Activated B cell treated with CpG ODN at 0.5 μM for 24 hours (primary cell): ENCODE measurements at regions of chr1 and their contacts with region 1.

Region 1: DNA sequence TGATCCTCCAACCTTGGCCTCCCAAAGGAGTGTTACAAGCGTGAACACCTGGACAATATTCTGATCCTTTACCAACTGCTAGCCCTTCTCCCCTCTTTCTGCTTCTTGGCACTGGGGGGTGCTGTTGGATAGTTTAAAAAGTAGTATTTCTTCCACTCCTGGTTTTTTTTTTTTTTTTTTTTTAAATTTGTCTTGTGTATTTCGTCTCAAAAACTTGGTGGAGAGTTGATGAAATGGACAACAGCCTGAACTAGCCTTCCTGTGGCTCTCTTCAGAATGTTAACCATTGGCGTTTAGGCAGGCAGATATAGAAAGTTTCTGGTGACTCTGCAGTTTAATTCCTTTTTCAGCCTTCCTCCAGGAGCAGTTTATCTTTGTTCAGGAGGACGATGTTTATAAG is 69.7 kb upstream of the USP24 start:
- DNase-seq: no peak
- ATAC-seq: no peak
- H3K4me3 Mint-ChIP-seq: no peak overlapping the region
- H3K27ac Mint-ChIP-seq: no peak overlapping the region
- H3K4me1 Mint-ChIP-seq: peaks cover 47% of the 10 kb centered on the region
- H3K27me3 Mint-ChIP-seq: peaks cover 3% of the 10 kb centered on the region
- CTCF ChIP-seq: no peak

Region 2: GRCh38 chr1:55257958-55258357 is 26.9 kb before region 1 on chr1:
- CTCF ChIA-PET with region 1: interaction called, 5 read pairs
- POLR2A ChIA-PET with region 1: interaction called, 15 read pairs
- intact Hi-C with region 1: loop called (anchors 1 kb)
- DNase-seq: peak; percentile 34
- ATAC-seq: peak; percentile 50
- H3K4me3 Mint-ChIP-seq: peak overlapping the region; percentile 57
- H3K27ac Mint-ChIP-seq: peak overlapping the region; percentile 93
- H3K4me1 Mint-ChIP-seq: peaks cover 84% of the 10 kb centered on the region
- H3K27me3 Mint-ChIP-seq: no peaks in the 10 kb centered on the region
- CTCF ChIP-seq: no peak

Region 3: DNA sequence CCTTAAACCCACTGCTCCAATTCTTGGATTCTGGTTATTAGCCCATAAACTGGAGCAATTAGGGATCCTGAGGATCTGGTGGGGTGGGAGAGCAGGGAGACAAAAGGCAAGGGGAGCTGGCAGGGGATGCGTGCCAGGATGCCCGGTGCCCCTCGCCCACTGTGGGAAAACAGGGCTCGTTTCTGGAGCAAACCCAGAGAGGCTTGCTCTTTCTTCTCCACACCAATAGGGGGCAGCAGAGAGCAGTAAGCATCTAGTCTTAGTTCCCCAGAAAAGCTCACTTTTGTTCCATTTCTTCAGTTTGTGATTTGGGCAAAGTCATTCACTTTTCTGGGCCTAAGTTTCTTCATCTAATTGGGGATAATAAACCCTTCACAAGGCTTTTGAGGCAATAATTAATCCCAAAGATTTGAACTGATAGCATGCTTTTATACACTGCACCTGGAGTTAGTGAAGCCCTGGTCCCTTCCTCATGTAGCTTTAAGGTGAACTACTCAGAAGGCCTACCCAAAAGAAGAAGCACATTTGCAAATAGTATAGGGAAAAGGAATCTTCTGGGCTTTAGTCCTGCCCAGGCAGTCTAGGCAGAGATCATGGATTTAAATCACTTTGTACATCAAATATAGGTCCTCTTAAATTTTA is 90.9 kb after region 1 on chr1:
- CTCF ChIA-PET with region 1: interaction called, 4 read pairs
- POLR2A ChIA-PET with region 1: no interaction called
- intact Hi-C with region 1: loop called (anchors 2 kb)
- DNase-seq: no peak
- ATAC-seq: peak; percentile 49
- H3K4me3 Mint-ChIP-seq: no peak overlapping the region
- H3K27ac Mint-ChIP-seq: no peak overlapping the region
- H3K4me1 Mint-ChIP-seq: no peaks in the 10 kb centered on the region
- H3K27me3 Mint-ChIP-seq: peaks cover 1% of the 10 kb centered on the region
- CTCF ChIP-seq: peak; percentile 33

Region 4: DNA sequence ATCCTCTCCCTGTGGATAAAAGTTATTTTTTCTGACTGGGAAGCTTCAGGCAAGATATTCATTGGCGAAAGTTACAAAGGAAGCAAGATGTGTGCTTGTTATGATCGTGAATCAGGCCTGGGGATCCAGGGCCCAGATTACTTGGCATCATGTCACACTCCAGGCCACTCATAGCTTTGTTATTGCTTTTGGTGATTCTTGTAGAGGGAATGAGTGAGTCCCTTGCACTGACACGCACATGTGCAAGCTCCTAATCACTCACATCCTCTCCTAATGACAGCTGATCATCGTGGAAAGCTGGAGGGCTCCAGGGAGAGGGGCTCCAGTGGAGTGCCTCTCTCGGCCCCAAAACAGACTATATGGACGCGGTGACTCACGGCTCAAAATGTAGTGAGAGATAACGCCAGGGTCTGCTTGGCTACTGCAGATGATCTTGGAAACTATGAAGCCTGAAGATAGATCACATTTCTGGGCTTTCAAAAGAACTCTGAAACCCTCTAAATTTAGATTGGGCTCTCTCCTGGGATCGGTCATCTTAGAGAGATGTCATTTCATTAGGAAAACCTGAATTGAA is 411.4 kb after region 1 on chr1:
- CTCF ChIA-PET with region 1: no interaction called
- POLR2A ChIA-PET with region 1: no interaction called
- intact Hi-C with region 1: no loop called
- DNase-seq: no peak
- ATAC-seq: no peak
- H3K4me3 Mint-ChIP-seq: no peak overlapping the region
- H3K27ac Mint-ChIP-seq: no peak overlapping the region
- H3K4me1 Mint-ChIP-seq: no peaks in the 10 kb centered on the region
- H3K27me3 Mint-ChIP-seq: peaks cover 12% of the 10 kb centered on the region
- CTCF ChIP-seq: no peak

Region 5: DNA sequence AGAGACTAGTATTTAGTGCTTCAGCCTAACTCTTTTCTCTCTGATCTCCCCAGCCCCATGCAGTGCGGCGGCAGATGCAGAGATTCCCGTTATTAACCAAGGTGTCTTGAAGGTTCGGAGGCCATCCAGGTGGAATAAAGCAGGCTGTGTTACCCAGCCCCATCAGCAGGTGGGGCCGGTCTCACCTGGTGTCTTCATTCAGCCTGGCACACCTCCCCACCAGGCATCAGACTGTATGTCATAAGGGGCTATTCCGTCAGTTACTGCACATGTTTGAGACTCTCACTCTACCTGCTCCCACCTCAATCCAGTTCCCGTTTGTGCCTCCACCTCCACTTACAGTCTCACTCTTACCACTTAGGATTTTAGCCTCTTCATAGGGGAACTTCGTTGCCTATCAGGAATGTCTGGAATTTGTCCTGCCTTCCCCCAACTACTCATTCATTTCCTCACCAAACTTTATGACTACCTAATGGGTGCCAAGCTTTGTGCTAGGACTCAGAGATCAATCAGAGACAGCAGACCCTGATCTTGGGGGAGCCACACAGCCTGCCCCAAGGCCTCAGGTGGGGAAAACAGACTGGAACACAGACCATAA is 1124.3 kb after region 1 on chr1:
- CTCF ChIA-PET with region 1: no interaction called
- POLR2A ChIA-PET with region 1: no interaction called
- intact Hi-C with region 1: loop called (anchors 1 kb)
- DNase-seq: peak; percentile 34
- ATAC-seq: no peak
- H3K4me3 Mint-ChIP-seq: no peak overlapping the region
- H3K27ac Mint-ChIP-seq: no peak overlapping the region
- H3K4me1 Mint-ChIP-seq: peaks cover 20% of the 10 kb centered on the region
- H3K27me3 Mint-ChIP-seq: no peaks in the 10 kb centered on the region
- CTCF ChIP-seq: no peak

Region 6: DNA sequence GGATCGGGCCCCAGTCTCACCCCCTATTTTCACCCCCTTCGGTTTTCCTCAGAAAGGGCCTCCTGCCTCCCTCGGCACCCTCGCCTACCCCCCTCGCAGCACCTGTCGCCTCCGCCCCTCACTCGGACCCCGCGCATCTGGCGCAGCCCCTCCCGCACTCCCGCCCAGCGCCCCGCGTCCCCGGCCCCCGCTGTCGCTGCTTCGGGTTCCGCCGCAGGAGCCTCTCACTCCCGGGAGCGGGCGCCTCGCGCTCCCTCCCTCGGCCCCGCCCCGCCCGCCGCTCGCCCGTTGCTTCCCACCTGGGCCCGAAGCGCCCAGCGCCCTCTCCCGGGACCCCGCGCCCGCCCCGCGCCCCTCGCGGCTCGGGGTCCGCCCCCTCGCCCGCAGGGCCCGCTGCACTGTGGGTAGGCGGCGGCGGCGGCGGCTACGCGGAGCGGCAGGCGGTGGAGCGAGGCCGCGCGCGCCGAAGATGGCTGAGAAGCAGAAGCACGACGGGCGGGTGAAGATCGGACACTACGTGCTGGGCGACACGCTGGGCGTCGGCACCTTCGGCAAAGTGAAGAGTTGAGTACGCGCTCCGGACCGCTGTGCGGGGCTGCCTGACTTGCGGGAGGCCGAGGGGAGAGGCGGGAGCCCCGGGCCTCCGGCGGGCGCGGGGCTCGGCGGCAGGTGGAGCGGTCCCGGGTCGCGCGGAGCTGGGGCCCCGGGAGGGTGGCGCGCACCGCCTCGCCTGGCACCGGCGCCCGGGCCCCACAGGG is 1360.2 kb after region 1 on chr1 and contains the start of gene PRKAA2:
- CTCF ChIA-PET with region 1: no interaction called
- POLR2A ChIA-PET with region 1: no interaction called
- intact Hi-C with region 1: loop called (anchors 5 kb)
- DNase-seq: peak; percentile 39
- ATAC-seq: peak; percentile 80
- H3K4me3 Mint-ChIP-seq: peak within 1 kb of the TSS; percentile 82
- H3K27ac Mint-ChIP-seq: no peak within 1 kb of the TSS
- H3K4me1 Mint-ChIP-seq: peaks cover 20% of the 10 kb centered on the region
- H3K27me3 Mint-ChIP-seq: peaks cover 46% of the 10 kb centered on the region
- CTCF ChIP-seq: no peak
- total RNA-seq, gene PRKAA2: not detected in 2 replicates

Region 7: GRCh38 chr1:56821140-56821797 is 1536.4 kb after region 1 on chr1:
- CTCF ChIA-PET with region 1: no interaction called
- POLR2A ChIA-PET with region 1: no interaction called
- intact Hi-C with region 1: loop called (anchors 2 kb)
- DNase-seq: peak; percentile 56
- ATAC-seq: peak; percentile 54
- H3K4me3 Mint-ChIP-seq: no peak overlapping the region
- H3K27ac Mint-ChIP-seq: no peak overlapping the region
- H3K4me1 Mint-ChIP-seq: no peaks in the 10 kb centered on the region
- H3K27me3 Mint-ChIP-seq: peaks cover 22% of the 10 kb centered on the region
- CTCF ChIP-seq: peak; percentile 32